ENCODE measurements at regions of chr22 and their contacts with region 1.

Region 1: DNA sequence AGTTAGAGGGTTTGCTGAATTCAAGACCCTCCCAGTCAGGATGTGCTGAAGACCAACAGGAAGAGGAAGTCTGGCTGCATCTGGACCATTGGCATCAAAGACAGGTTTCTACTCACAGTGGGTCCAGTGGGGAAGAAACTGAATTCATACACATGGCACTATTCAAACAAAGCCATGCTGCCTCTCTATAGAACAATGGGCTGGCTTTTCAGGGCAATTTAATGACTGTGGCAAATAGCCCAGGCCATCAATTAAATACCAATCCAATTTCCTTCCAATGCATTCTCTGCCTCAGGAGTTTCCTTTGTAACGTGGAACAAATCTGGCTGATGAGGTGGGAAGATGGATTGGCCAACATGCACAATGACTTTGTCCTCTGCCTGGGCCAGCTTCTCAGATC is 98.6 kb downstream of the SEZ6L start:
- DNase-seq: no peak
- ATAC-seq: no peak
- H3K4me3 ChIP-seq: no peak overlapping the region
- H3K27ac ChIP-seq: no peak overlapping the region
- H3K4me1 ChIP-seq: no peaks in the 10 kb centered on the region
- H3K27me3 ChIP-seq: peaks cover 0 to 59% (median 28%) of the 10 kb centered on the region in 7 donors
- CTCF ChIP-seq: no peak

Region 2: GRCh38 chr22:26199667-26200066 is 68.2 kb before region 1 on chr22:
- intact Hi-C with region 1: loop called in 1 of 10 experiments (anchors 10 kb)
- DNase-seq: no peak
- ATAC-seq: no peak
- H3K4me3 ChIP-seq: no peak overlapping the region
- H3K27ac ChIP-seq: no peak overlapping the region
- H3K4me1 ChIP-seq: no peaks in the 10 kb centered on the region
- H3K27me3 ChIP-seq: peaks cover 0 to 47% (median 17%) of the 10 kb centered on the region in 7 donors
- CTCF ChIP-seq: no peak